ENCODE measurements at regions of chr2 and their contacts with region 1.

Region 1: DNA sequence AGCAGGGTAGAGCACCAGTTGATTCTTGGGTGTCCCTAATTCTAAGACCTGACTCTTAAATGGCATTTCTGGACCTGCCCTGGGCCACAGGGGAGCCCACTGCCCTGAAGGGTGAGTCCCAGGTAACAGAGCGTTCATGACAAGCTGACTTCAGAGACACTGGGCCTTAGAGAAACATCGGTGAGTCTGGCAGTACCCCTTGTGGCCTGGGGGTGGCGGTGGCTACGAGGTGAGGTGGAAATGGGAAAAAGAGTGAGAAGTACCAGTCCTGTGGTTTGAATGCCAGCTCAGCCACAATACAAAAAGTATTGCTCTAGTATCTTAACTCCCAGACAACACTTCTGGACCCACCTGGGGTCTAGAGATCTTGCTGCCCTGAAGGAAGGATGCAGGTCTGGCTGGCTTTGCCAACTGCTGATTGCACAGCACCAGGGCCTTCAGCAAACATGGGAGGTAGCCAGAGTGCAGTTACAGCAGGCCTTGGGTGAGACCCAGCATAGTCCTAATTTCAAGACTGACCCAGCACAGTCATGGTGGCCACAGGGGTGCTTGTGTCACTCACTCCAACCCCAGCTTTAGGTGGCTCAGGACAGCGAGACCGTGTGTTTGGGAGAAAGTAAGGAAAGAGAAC is 44.5 kb downstream of the USP34 start:
- DNase-seq: peak; percentile 74
- CTCF ChIP-seq: peak; percentile 94

Region 2: GRCh38 chr2:61411109-61411508 is 15.3 kb before region 1 on chr2:
- CTCF ChIA-PET with region 1: interaction called, 31 read pairs
- POLR2A ChIA-PET with region 1: no interaction called
- DNase-seq: no peak
- CTCF ChIP-seq: no peak

Region 3: DNA sequence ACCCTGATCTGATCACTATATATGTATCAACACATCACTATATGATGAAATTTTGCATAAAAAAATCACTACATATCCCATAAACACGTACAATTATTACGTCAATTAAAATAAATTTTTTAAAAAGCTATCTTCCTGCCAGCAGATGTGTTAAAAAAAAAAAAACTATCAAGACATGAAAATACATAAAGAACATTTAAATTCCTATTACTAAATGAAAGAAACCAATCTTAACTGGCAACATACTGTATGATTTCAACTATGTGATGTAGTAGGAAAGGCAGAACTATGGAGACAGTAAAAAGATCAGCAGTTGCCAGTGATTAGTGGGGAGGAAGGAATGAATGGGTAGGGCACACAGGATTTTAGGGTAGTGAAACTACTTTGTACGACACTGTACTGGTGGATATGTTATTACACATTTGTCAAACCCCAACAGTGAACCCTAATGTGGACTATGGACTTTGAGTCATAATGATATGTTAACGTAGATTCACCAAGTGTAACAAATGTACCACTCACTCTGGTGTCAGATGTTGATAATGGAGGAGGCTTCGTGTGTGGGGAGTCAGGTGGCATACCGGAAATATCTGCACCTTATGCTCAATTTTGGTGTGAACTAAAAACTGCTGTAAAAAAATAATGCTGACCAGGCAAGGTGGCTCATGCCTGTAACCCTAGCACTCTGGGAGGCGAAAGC is 17.1 kb after region 1 on chr2:
- CTCF ChIA-PET with region 1: interaction called, 53 read pairs
- POLR2A ChIA-PET with region 1: interaction called, 6 read pairs
- DNase-seq: peak; percentile 49
- CTCF ChIP-seq: no peak

Region 4: DNA sequence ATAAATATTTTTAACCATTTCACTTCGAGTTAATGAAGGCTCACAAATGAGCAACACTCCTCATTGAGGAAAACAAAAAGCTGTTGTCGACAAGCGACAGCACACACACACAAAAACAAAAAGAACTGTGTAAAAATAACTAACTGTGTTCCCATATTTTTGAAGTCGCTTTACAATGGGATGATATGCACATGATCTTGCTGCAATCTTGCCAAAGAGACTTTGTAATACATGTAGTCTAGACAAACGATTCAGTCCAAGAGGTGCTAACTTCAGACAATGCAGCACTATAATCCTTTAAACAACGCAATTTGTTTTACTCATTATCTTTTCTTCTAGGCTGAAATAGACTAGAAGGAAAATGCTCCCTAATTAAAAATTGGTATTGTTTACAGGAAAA is 51.7 kb after region 1 on chr2:
- CTCF ChIA-PET with region 1: interaction called, 13 read pairs
- POLR2A ChIA-PET with region 1: no interaction called
- DNase-seq: no peak
- CTCF ChIP-seq: no peak

Measured in GM10248 (cell line).